ENCODE measurements at regions of chr3 and their contacts with region 1.

Region 1: GRCh38 chr3:184371570-184372018 is 6.4 kb downstream of the THPO start:
- DNase-seq: peak; percentile 73
- H3K4me3 ChIP-seq: no peak overlapping the region
- H3K27ac ChIP-seq: no peak overlapping the region
- H3K4me1 ChIP-seq: peaks cover 4% of the 10 kb centered on the region
- H3K27me3 ChIP-seq: no peaks in the 10 kb centered on the region
- CTCF ChIP-seq: peak; percentile 98 to 99

Region 2: DNA sequence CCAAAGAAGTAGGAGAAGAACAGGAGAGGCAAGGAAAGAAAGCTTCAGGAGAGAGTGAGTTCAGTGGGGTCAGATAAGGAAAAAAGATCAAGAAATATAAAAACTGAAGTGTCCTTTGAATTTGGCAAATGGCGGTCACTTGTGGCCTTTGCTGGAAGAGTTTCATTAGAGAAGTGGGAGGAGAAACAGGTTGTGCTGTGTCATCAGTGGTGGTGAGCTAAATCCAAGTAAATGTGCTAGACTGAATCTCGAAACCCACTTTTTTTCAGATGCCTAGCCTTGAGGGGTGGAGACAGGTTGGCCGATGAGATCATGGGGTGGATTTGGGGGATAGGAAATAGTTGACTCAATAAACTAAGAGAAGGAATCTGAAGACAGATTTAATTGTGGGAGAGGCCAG is 52.0 kb after region 1 on chr3:
- CTCF ChIA-PET with region 1: no interaction called
- dilution Hi-C with region 1: loop called (anchors 5 kb)
- in situ Hi-C with region 1: no loop called
- intact Hi-C with region 1: no loop called
- DNase-seq: peak; percentile 15
- H3K4me3 ChIP-seq: no peak overlapping the region
- H3K27ac ChIP-seq: no peak overlapping the region
- H3K4me1 ChIP-seq: peaks cover 5% of the 10 kb centered on the region
- H3K27me3 ChIP-seq: peaks cover 3% of the 10 kb centered on the region
- CTCF ChIP-seq: no peak

Region 3: GRCh38 chr3:184443380-184443779 is 71.8 kb after region 1 on chr3:
- CTCF ChIA-PET with region 1: no interaction called
- dilution Hi-C with region 1: no loop called
- in situ Hi-C with region 1: no loop called
- intact Hi-C with region 1: no loop called
- DNase-seq: peak; percentile 39
- H3K4me3 ChIP-seq: no peak overlapping the region
- H3K27ac ChIP-seq: no peak overlapping the region
- H3K4me1 ChIP-seq: peaks cover 9% of the 10 kb centered on the region
- H3K27me3 ChIP-seq: no peaks in the 10 kb centered on the region
- CTCF ChIP-seq: no peak

Region 4: DNA sequence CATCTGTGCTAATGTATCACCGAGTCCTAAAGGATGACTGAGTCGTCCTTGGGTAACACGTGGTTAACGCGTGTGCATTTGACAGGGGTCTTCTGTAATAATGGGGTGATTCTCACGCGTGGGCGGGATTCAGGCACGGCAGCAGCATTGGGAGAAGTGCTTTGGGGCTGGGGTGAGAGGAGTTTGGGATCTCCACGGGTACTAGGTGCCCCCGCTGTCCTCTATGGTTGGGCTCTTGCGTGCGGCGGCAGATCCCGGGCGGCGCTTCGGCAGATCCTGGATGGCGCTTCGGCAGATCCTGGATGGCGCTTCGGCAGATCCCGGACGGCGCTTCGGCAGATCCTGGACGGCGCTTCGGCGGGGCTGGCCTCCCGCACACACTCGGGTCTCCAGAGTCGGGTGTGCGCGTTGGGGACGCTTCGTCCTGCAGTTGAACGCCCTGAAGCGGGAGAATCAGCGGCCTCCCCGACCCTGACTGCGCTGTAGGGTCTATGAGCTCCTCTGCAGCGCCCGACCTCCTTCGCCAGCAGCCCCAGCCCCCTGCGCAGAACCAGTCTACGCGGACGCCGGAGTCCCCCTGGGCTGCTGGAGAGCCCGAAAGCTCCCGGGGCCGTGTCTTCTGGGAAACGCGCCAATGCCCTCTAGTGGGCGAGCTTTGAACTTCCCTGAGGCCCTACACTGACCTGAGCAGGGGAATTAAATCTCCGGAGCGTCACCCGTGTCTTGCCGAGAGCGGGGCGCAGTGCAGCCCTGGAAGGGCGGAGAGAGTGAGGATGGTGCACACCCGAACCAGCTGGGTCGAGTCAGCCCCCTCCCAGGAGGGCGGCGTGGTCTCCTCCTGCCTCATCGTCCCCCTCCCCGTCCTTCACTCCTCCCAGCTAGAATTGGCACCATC is 141.9 kb after region 1 on chr3:
- CTCF ChIA-PET with region 1: interaction called, 9 read pairs
- dilution Hi-C with region 1: no loop called
- in situ Hi-C with region 1: no loop called
- intact Hi-C with region 1: loop called (anchors 1 kb)
- DNase-seq: peak; percentile 63
- H3K4me3 ChIP-seq: peak overlapping the region; percentile 41 to 62 (median 54)
- H3K27ac ChIP-seq: no peak overlapping the region
- H3K4me1 ChIP-seq: peaks cover 6% of the 10 kb centered on the region
- H3K27me3 ChIP-seq: peaks cover 3% of the 10 kb centered on the region
- CTCF ChIP-seq: peak; percentile 63 to 85

Region 5: GRCh38 chr3:184525337-184526087 is 153.9 kb after region 1 on chr3:
- CTCF ChIA-PET with region 1: no interaction called
- dilution Hi-C with region 1: no loop called
- in situ Hi-C with region 1: no loop called
- intact Hi-C with region 1: no loop called
- DNase-seq: no peak
- H3K4me3 ChIP-seq: peak overlapping the region; percentile 31 to 66 (median 48)
- H3K27ac ChIP-seq: peak overlapping the region; percentile 57
- H3K4me1 ChIP-seq: peaks cover 25% of the 10 kb centered on the region
- H3K27me3 ChIP-seq: no peaks in the 10 kb centered on the region
- CTCF ChIP-seq: no peak

Region 6: DNA sequence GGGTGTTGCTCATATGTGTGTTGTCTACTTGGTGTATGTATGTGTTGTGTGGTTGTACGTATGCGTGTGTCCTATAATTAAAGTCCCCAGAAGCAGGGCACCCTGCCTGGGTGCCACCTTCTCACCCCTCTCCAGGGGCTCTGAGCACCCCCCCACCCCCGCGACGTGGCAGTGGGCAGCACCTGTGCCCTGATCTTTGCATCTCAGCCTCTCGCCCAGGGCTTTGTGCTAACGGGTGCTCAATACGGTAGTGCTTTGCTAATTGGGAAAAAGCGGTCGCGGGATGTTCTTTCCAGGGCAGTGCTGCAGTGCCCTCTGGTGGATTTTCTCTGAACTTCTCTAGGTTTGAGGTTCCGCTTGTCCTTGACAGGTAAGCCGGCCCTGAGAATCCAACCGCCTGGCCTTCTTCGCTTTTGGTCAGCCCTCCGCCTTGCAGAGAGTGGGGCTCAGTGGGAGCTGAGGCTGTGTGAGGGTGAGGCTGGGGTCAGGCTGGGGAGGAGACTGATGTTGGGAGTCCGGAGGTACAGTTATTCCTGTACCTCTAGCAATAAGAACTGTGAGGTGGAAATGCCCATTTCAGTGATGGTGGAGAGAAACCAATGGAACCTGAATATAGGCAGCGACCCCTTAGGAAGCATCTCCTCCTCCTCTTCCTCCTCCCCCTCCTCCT is 172.4 kb after region 1 on chr3:
- CTCF ChIA-PET with region 1: interaction called, 8 read pairs
- dilution Hi-C with region 1: loop called (anchors 5 kb)
- in situ Hi-C with region 1: loop called (anchors 5 kb)
- intact Hi-C with region 1: loop called (anchors 1 kb)
- DNase-seq: peak; percentile 72
- H3K4me3 ChIP-seq: no peak overlapping the region
- H3K27ac ChIP-seq: no peak overlapping the region
- H3K4me1 ChIP-seq: peaks cover 2% of the 10 kb centered on the region
- H3K27me3 ChIP-seq: no peaks in the 10 kb centered on the region
- CTCF ChIP-seq: peak; percentile 84 to 86

Measured in mammary epithelial cell (primary cell).